Cardiac septum (tissue), 1 donor: ENCODE measurements at regions of chr2 and their contacts with region 1.

Region 1: DNA sequence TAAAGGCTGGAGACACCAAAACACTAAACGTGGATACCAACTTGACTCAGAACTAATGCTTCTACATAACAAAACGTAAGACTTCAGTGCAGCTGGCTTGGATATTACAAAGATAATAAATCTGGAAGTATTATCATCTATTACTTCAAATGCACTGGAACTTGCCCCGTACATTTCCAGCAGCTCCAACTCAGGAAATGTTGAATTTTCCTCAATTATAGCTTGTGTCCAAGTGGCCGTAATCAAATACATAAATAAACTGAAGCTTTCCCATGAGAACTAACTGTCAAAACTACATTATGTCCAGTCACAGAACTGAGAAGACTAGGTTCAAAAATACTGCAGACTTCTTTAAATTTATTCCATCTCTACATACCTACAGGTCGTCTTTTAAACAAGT is 6.2 kb downstream of the PDE1A start:
- DNase-seq: no peak

Region 2: GRCh38 chr2:182259629-182260150 is 161.0 kb before region 1 on chr2:
- intact Hi-C with region 1: no loop called
- DNase-seq: no peak

Region 3: DNA sequence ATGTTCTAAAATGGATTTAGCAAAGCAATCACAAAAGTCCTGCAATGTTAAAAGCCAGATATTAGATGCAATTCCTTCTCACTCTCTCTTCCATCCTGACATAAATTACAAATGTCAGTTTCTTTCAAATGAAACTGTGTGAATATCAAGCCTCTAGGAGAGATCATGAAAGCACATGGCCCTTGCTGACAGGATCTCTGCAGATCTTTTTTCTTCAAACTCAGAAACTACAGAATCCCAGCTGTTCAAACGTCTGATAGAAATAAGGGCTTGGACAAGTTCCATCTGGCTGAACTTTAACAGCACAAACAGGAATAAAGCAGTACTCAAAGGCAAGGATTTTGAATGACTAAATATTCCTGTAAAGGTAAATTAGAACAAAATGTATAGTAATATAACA is 41.4 kb before region 1 on chr2:
- intact Hi-C with region 1: loop called (anchors 2 kb)
- DNase-seq: no peak

Region 4: GRCh38 chr2:182447863-182448262 is 27.2 kb after region 1 on chr2:
- intact Hi-C with region 1: no loop called
- DNase-seq: no peak

Region 5: DNA sequence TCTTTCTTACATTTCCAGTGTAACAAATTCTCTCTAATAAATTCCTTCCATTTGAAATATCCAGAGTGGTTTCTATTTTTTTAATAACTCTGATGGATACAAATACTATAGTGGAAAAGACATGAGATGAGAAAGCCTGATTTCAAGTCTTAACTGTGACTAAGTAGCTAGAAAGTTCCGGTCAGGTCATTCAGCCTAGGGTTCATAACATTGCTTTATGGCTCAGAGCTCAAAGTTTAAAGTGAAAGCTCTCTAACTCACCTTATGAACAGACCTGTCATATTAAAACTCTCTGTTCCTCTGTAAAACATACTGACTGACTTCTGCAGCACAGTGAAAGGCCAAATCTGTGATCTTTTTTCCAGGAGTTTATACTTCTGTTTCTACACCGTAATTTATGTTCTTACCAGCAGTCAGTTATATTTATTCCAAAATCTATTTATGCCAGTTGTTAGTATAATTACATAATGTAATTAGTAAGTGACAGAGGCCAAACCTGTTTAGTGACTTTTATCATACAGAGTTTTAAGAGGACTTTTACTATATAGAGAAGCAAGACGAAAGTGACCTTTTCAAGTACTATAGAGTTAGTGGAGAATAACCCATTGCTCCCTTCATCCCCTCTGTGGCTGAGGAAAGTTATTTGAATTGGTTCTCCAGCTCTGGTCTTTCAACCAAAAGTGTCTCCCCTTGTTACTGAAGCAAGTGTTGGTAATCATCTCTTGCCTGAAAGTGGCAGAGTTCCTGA is 124.9 kb after region 1 on chr2:
- intact Hi-C with region 1: no loop called
- DNase-seq: no peak

Region 6: DNA sequence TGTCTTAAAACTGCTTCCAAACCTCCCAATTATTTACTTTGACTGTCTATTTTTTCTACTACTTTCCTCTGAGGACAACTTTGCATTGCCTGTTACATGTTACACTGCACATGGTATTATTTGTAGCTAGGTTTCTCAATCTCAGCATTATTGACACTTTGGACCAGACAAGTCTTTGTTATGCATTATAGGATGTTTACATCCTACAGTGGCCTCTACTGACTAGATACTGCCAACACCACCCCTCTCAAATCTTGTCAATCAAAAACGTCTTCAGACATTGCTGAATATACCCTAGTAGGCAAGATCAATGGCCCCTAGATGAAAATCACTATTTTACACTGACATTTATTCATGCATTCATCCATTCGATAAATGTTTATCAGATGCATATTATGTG is 165.8 kb after region 1 on chr2:
- intact Hi-C with region 1: no loop called
- DNase-seq: no peak